ACHN (cell line): ENCODE measurements at regions of chr4 and their contacts with region 1.

Region 1: DNA sequence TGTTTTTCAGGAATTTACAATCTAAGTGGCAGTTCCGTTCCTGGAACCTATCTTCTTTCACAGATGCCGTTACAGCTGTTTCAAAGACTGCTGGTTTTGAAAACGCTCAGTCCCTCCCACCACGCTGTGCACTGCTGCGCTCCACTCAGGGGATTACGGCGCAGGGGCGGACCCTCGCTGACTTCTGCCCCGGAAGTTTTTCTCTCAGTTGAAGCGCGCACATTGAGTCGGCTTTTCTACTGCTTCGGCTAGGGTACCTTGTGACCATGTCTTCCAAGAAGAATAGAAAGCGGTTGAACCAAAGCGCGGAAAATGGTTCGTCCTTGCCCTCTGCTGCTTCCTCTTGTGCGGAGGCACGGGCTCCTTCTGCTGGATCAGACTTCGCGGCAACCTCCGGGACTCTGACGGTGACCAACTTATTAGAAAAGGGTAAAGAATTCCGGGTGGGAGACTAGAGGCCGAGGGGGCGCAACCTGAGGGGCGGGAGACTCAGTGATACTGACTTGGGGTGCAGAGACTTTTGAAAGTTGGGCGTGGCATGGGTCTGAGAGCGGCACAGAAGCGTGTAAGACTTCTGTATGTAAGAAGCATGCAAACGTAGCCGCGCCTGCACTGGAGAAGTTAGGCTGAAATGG is 597 bp upstream of the NUDT6 start:
- DNase-seq: peak; percentile 80

Region 2: DNA sequence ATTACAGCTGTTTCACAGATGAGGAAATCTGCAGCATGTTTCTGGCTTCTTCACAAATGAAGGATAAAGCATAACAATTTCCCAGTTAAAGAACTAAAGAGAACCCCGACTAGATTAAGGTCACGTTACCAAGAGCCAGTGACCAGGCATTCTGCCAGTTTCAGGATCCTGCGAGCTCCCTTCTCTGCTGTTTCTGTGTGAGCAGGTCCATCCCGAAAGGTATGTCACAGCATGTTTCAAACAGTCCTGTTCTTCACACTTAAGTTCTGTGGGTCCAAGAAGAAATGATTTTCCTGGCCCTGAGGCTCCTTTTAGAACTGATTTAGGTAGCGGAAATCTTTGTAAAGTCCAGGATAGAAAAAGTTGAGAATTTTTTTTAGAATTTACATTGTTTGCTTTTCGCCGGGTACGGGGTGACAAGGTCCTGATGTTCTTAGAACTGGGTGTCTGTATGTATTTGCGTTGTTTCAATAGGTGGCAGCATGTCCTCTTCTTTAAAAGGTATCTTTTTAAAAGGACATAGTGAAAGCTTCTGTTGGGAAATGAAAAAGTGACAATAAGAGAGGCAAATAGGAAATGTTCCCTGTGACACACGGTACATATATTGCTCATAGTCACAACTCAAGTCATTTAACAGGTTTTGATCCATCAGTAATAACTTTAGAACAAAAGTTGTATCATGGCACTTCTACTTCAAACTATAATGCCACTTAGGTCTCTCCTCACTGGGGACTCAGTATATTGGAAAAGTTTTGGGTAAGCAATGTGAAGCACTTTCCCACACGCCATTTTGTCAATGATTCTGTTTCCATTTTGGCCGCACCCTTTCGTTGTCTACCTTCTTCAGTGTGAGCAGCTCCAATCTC is 320.5 kb before region 1 on chr4:
- in situ Hi-C with region 1: loop called (anchors 25 kb)
- DNase-seq: peak; percentile 60

Region 3: DNA sequence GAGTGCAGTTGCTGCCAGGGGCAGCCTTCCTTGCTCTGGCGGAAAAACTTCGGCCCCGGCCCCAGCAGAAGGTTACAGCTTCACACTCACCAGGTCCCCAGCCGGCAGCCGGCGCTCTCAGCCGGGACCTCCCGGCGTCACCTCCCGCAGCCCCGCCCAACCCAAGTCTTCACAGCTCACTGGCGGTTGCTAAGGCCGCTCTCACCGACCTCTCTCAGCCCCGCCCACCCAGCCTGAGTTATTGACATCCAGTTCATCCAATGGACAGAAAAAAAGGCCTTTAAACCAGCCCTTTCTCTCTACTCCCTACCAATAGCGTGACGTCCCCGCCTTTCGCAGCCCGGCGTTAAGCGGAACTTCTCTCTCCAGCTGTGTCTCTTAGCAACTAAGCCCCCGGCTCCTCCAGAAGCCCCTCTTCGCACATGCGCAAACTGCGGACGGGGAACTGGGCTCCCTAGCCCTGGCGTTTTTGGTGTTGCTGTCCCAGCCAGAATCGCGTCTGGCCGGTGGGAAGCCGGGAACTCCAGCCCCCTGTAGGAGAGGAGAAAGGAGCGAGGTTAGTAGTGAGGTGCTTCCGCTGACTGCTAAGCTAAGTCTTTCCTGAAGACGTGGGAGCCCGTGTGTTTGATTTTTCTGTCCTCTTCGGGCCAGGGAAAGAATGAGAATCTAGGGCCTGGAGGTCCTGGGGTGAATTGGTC is 190.5 kb before region 1 on chr4 and contains the start of gene BBS12:
- in situ Hi-C with region 1: loop called (anchors 25 kb)
- DNase-seq: peak; percentile 99